ENCODE measurements at regions of chr2 and their contacts with region 1.

Region 1: GRCh38 chr2:136059036-136059472 is 58.9 kb downstream of the CXCR4 start:
- DNase-seq: peak; percentile 63
- ATAC-seq: peak; percentile 63
- H3K4me3 ChIP-seq: no peak overlapping the region
- H3K27ac ChIP-seq: peak overlapping the region; percentile 40; the same call in 1 of the 2 replicates
- H3K4me1 ChIP-seq: peaks cover 51% of the 10 kb centered on the region
- H3K27me3 ChIP-seq: no peaks in the 10 kb centered on the region
- CTCF ChIP-seq: no peak
- EP300 ChIP-seq: peak in 1 of 2 experiments; percentile 45; a peak in 1 of 4 replicates
- POLR2A ChIP-seq: no peak
- RAD21 ChIP-seq: peak; percentile 15; the same call in 1 of the 2 replicates

Region 2: DNA sequence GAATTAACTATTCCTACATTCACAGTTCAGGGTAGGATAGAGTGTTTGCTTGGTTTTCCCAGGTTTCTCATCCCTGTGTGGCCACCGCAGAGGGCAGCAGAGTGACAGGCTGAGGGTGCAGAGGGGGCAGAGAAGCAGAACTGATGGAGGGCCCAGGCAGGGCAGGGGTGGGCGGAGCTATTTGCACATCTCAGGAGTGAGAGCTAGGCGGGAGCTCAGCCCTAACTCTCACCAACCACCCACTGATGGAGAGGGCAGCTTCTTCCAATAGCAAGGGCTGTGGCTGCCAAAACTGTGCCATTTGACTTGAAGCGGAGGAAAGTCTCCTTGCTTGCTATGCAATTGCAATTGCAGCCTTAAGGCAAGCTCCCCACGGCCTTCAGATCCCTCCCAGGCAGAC is 61.7 kb before region 1 on chr2:
- CTCF ChIA-PET with region 1: interaction called, 43 read pairs
- POLR2A ChIA-PET with region 1: interaction called, 26 read pairs
- RAD21 ChIA-PET with region 1: interaction called, 103 read pairs
- SMC1A ChIA-PET with region 1: interaction called, 195 read pairs
- in situ Hi-C with region 1: no loop called
- intact Hi-C with region 1: no loop called
- DNase-seq: no peak
- ATAC-seq: peak; percentile 82
- H3K4me3 ChIP-seq: no peak overlapping the region
- H3K27ac ChIP-seq: no peak overlapping the region
- H3K4me1 ChIP-seq: peaks cover 11% of the 10 kb centered on the region
- H3K27me3 ChIP-seq: no peaks in the 10 kb centered on the region
- CTCF ChIP-seq: peak; percentile 5 to 27 (median 7); a peak in 3 of 6 replicates
- EP300 ChIP-seq: no peak
- POLR2A ChIP-seq: no peak
- RAD21 ChIP-seq: peak; percentile 61

Region 3: DNA sequence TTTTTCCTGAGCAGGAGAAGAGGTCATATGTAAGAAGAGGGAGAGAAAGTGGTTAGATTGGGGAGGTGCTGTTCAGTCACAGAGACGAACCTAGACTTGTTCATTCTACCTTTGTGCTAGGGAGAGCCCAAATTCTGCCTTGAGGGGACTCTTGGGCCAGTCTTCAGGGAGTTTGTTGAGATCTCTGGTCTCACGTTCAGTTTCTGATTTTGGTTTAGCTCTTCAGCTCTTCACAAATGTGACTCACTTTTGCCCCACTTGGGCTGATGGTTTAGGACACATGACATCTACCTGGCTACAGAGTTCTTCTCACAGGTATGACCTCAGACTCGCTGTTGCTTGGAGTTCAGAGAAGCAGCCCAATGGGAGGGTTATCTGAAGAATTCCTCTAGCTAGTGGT is 24.4 kb before region 1 on chr2:
- CTCF ChIA-PET with region 1: interaction called, 5 read pairs
- POLR2A ChIA-PET with region 1: interaction called, 80 read pairs
- RAD21 ChIA-PET with region 1: interaction called, 348 read pairs
- SMC1A ChIA-PET with region 1: interaction called, 961 read pairs
- in situ Hi-C with region 1: no loop called
- intact Hi-C with region 1: loop called (anchors 1 kb)
- DNase-seq: no peak
- ATAC-seq: peak; percentile 78
- H3K4me3 ChIP-seq: no peak overlapping the region
- H3K27ac ChIP-seq: no peak overlapping the region
- H3K4me1 ChIP-seq: peaks cover under 1% of the 10 kb centered on the region; the same call in 1 of the 2 replicates
- H3K27me3 ChIP-seq: 0 out of 4 replicates have a peak, but pooled peaks cover 0 to 2% of the 10 kb centered on the region in 2 experiments
- CTCF ChIP-seq: no peak
- EP300 ChIP-seq: no peak
- POLR2A ChIP-seq: no peak
- RAD21 ChIP-seq: no peak

Region 4: DNA sequence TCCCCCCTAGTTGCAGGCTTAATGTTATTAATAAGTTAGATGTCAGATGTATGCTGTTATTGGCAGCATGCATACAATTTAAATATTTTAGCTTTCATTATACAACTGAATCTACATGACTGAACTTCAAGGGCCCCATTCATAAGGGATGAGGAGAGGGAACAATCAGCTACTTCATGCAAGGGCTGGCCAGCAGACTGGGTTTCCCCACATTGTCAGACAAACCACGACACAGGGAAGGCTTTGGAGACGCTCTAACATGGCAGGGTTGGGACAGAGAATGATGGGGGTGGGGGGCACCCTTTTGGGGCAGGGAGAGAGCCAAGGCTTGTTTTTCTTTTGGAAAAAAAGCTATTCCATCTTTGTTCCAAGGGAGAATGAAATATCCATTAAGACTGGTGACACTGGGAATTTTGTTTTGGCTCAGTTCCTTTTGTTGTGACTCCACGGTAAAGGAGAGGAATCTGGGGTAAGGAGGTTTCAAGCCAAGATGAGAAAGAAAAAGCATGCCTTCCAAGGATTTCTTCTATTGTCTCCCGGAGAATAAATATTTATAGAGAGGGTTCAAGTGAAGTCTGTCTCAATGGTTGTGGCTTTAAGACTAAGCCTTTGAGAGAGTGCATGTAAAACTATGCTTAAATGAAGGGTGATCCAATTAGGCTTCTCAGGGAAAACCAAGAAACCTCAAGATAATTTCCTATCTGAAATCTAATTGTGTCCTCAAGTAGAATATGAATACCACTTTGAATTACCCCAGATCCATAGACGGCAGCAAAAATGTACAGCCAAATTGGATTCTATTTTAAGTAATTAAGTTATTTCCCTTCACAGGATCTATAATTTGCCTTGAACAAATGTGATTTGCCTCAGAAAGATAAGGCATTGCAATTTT is 53.5 kb after region 1 on chr2:
- CTCF ChIA-PET with region 1: interaction called, 103 read pairs
- POLR2A ChIA-PET with region 1: interaction called, 23 read pairs
- RAD21 ChIA-PET with region 1: interaction called, 221 read pairs
- SMC1A ChIA-PET with region 1: interaction called, 400 read pairs
- in situ Hi-C with region 1: no loop called
- intact Hi-C with region 1: loop called (anchors 1 kb)
- DNase-seq: no peak
- ATAC-seq: peak; percentile 3; the same call in 2 of the 3 replicates
- H3K4me3 ChIP-seq: no peak overlapping the region
- H3K27ac ChIP-seq: no peak overlapping the region
- H3K4me1 ChIP-seq: peaks cover 5% of the 10 kb centered on the region; the same call in 1 of the 2 replicates
- H3K27me3 ChIP-seq: 0 out of 4 replicates have a peak, but pooled peaks cover 0 to 3% of the 10 kb centered on the region in 2 experiments
- CTCF ChIP-seq: no peak
- EP300 ChIP-seq: no peak
- POLR2A ChIP-seq: no peak
- RAD21 ChIP-seq: no peak

Region 5: DNA sequence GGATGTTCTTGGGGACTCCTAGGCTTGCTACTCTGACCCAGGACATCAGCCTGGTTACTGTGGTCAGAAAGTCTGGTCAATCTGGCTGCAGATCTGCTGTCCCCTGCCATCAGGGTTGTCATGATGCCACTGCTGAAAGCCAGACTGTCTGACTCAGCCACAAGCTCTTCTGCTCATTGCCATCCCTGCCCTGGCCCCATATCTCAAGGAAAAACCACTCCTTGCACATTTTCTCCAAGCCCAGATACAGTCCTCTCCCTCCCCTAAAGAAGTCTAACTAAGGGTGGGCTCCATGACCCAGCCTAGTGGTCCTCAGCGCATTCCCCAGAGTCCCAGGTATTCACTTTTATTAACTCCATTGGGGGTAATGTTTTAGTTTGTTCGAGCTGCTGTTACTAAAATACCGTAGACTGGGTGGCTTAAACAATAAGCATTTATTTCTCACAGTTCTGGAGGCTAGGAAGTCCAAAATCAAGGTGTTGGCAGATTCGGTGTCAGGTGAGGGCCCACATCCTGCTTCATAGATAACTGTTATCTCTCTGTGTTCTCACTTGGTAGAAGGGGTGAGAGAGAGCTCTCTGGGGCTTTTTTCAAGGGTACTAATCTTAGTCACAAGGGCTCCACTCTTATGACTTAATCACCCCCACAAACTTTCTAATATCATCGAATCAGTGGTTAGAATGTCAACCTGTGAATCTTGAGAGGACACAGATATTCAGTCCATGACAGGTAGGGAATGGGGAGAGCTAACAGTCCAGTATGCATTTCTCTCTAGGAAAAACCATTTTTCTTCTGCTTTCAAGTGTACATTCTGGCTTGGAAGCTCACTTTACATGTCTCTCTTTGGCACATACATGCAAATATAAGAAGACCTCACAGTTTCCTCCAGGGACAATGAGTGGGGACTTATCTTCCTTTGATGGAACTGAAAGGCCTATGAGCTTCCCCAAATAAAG is 153.6 kb after region 1 on chr2:
- CTCF ChIA-PET with region 1: interaction called, 7 read pairs
- POLR2A ChIA-PET with region 1: interaction called, 13 read pairs
- RAD21 ChIA-PET with region 1: interaction called, 78 read pairs
- SMC1A ChIA-PET with region 1: interaction called, 35 read pairs
- in situ Hi-C with region 1: no loop called
- intact Hi-C with region 1: loop called (anchors 2 kb)
- DNase-seq: peak; percentile 34
- ATAC-seq: peak; percentile 83
- H3K4me3 ChIP-seq: no peak overlapping the region
- H3K27ac ChIP-seq: no peak overlapping the region
- H3K4me1 ChIP-seq: peaks cover 4% of the 10 kb centered on the region
- H3K27me3 ChIP-seq: peaks cover 0 to 8% of the 10 kb centered on the region in 2 experiments; a peak in 2 of 4 replicates
- CTCF ChIP-seq: no peak
- EP300 ChIP-seq: peak in 1 of 2 experiments; percentile 78; a peak in 3 of 4 replicates
- POLR2A ChIP-seq: no peak
- RAD21 ChIP-seq: no peak

Region 6: GRCh38 chr2:136305517-136306192 is 246.6 kb after region 1 on chr2:
- CTCF ChIA-PET with region 1: no interaction called
- POLR2A ChIA-PET with region 1: interaction called, 3 read pairs
- RAD21 ChIA-PET with region 1: interaction called, 11 read pairs
- SMC1A ChIA-PET with region 1: interaction called, 14 read pairs
- in situ Hi-C with region 1: no loop called
- intact Hi-C with region 1: no loop called
- DNase-seq: no peak
- ATAC-seq: peak; percentile 93
- H3K4me3 ChIP-seq: no peak overlapping the region
- H3K27ac ChIP-seq: no peak overlapping the region
- H3K4me1 ChIP-seq: peaks cover 6% of the 10 kb centered on the region
- H3K27me3 ChIP-seq: peaks cover 0 to 5% of the 10 kb centered on the region in 2 experiments; a peak in 1 of 4 replicates
- CTCF ChIP-seq: no peak
- EP300 ChIP-seq: peak; percentile 62 to 64; a peak in 1 of 4 replicates
- POLR2A ChIP-seq: no peak
- RAD21 ChIP-seq: no peak

Region 7: DNA sequence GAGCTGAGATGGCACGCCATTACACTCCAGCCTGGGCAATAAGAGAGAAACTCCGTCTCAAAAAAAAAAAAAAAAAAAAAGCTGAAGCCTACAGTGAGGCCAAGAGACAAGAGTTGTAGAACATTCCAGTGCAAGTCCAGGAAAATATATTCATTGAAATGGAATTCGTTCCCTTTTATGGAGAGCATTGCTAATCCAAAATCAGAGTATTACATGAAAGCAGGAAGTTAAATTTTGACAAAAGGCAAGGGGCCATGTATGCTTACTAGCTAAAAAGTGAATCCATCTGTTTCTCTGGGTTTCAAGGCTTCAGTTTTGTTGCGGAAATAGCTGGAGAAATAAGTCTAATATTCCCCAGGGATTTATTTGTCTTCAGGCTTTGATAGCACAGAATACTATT is 1178.0 kb after region 1 on chr2:
- CTCF ChIA-PET with region 1: no interaction called
- POLR2A ChIA-PET with region 1: no interaction called
- RAD21 ChIA-PET with region 1: no interaction called
- SMC1A ChIA-PET with region 1: no interaction called
- in situ Hi-C with region 1: no loop called
- intact Hi-C with region 1: no loop called
- DNase-seq: no peak
- ATAC-seq: no peak
- H3K4me3 ChIP-seq: no peak overlapping the region
- H3K27ac ChIP-seq: no peak overlapping the region
- H3K4me1 ChIP-seq: no peaks in the 10 kb centered on the region
- H3K27me3 ChIP-seq: no peaks in the 10 kb centered on the region
- CTCF ChIP-seq: no peak
- EP300 ChIP-seq: no peak
- POLR2A ChIP-seq: no peak
- RAD21 ChIP-seq: no peak